Lower leg skin (tissue), 4 donors: ENCODE measurements at regions of chr6 and their contacts with region 1.

Region 1: GRCh38 chr6:139549561-139550070 is 175.2 kb upstream of the CITED2 start:
- DNase-seq: no peak
- H3K4me3 ChIP-seq: no peak overlapping the region
- CTCF ChIP-seq: no peak
- POLR2A ChIP-seq: no peak

Region 2: GRCh38 chr6:138454981-138455706 is 1094.5 kb before region 1 on chr6:
- intact Hi-C with region 1: loop called (anchors 5 kb)
- DNase-seq: no peak
- H3K4me3 ChIP-seq: no peak overlapping the region
- CTCF ChIP-seq: no peak
- POLR2A ChIP-seq: no peak

Region 3: GRCh38 chr6:139577763-139578604 is 28.4 kb after region 1 on chr6:
- intact Hi-C with region 1: no loop called
- DNase-seq: no peak
- H3K4me3 ChIP-seq: no peak overlapping the region
- CTCF ChIP-seq: no peak
- POLR2A ChIP-seq: no peak